ENCODE measurements at regions of chr18 and their contacts with region 1.

Region 1: DNA sequence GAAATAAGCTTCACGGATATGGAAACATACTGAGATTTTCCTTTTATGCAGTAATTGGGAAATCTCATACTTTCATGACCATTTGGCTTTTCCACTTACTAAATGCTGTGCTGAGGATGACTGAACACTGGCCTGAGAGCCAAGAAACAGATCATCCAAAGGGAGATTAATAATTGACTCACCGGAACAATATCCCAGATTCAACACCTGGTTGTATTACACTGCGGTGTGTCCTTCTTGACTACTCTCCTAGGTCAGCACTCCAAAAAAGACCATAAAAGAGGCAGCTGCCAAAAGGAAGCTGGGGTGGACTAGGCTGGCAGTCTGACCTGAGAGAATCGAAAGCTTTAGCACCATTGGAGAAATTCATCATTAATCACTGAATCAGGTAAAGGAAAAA is 469.1 kb downstream of the CBLN2 start:
- DNase-seq: no peak
- ATAC-seq: no peak
- H3K4me3 ChIP-seq: no peak overlapping the region
- H3K27ac ChIP-seq: no peak overlapping the region
- H3K4me1 ChIP-seq: no peaks in the 10 kb centered on the region
- H3K27me3 ChIP-seq: no peaks in the 10 kb centered on the region
- CTCF ChIP-seq: no peak

Region 2: GRCh38 chr18:72013427-72013850 is 61.6 kb before region 1 on chr18:
- intact Hi-C with region 1: loop called in 1 of 10 experiments (anchors 10 kb)
- DNase-seq: no peak
- ATAC-seq: no peak
- H3K4me3 ChIP-seq: no peak overlapping the region
- H3K27ac ChIP-seq: no peak overlapping the region
- H3K4me1 ChIP-seq: no peaks in the 10 kb centered on the region
- H3K27me3 ChIP-seq: no peaks in the 10 kb centered on the region
- CTCF ChIP-seq: no peak

Region 3: DNA sequence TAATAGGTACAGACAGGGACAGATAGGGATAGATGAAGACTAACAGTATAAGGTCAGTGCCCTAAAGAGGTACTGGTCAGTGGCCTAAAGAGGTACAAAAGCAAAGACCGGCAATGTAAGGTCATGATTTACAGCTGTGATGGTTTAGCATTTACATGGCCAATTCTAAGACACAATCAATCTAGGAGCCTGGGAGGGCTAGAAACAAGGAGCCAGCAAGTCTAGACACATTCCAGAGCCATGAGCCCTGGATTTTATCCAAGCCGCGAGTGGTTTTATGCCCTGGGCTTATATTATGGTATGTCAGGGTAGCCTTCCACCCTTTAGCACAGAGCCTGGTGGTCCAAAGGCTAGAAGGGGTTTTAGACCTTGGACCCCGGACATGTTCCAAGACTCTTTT is 344.9 kb after region 1 on chr18:
- intact Hi-C with region 1: no loop called
- DNase-seq: no peak
- ATAC-seq: no peak
- H3K4me3 ChIP-seq: no peak overlapping the region
- H3K27ac ChIP-seq: no peak overlapping the region
- H3K4me1 ChIP-seq: no peaks in the 10 kb centered on the region
- H3K27me3 ChIP-seq: no peaks in the 10 kb centered on the region
- CTCF ChIP-seq: no peak